ENCODE measurements at regions of chr11 and their contacts with region 1.

Region 1: DNA sequence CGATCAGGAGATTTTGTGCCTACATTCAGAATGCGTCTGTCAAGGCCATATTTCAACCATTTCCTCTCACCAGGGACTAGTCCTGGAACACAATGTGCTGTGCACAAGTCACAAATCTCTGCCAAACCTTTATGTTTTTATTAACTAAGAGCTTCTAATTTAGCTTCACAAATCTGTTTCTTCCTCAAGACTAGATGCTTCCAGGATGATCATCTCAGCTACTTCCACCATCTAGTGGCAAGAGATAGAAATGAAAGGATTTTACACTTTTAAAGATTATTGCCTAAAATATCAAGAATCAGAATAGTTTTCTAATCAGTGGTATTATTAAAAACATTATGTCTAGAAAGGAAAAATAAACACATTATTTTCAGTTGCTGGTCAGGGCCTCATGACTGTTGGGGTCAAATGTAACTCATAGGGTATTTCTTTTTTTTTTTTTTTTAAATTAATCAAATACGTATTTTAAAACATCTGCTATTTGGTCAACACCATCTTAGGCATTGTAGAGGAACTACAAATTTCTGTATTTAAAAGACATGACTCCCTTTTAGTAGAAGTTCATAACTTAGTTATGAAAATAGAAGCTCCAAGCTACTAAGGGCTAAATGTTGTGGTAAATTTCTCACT is 1102.6 kb downstream of the DLG2 start:
- DNase-seq: peak; percentile 25
- ATAC-seq: no peak
- H3K4me3 ChIP-seq: no peak overlapping the region
- H3K27ac ChIP-seq: no peak overlapping the region
- H3K4me1 ChIP-seq: no peaks in the 10 kb centered on the region
- H3K27me3 ChIP-seq: no peaks in the 10 kb centered on the region
- CTCF ChIP-seq: peak; percentile 49
- POLR2A ChIP-seq: no peak
- RAD21 ChIP-seq: peak; percentile 52

Region 2: GRCh38 chr11:84384731-84385130 is 139.8 kb before region 1 on chr11:
- CTCF ChIA-PET with region 1: no interaction called
- POLR2A ChIA-PET with region 1: no interaction called
- dilution Hi-C with region 1: no loop called
- in situ Hi-C with region 1: no loop called
- intact Hi-C with region 1: loop called (anchors 5 kb)
- DNase-seq: peak; percentile 34
- ATAC-seq: peak; percentile 60; the same call in 1 of the 2 replicates
- H3K4me3 ChIP-seq: no peak overlapping the region
- H3K27ac ChIP-seq: no peak overlapping the region
- H3K4me1 ChIP-seq: no peaks in the 10 kb centered on the region
- H3K27me3 ChIP-seq: no peaks in the 10 kb centered on the region
- CTCF ChIP-seq: peak; percentile 63
- POLR2A ChIP-seq: no peak
- RAD21 ChIP-seq: peak; percentile 26; the same call in 1 of the 2 replicates

Measured in IMR-90 (cell line).